ENCODE measurements at regions of chr17 and their contacts with region 1.

Region 1: DNA sequence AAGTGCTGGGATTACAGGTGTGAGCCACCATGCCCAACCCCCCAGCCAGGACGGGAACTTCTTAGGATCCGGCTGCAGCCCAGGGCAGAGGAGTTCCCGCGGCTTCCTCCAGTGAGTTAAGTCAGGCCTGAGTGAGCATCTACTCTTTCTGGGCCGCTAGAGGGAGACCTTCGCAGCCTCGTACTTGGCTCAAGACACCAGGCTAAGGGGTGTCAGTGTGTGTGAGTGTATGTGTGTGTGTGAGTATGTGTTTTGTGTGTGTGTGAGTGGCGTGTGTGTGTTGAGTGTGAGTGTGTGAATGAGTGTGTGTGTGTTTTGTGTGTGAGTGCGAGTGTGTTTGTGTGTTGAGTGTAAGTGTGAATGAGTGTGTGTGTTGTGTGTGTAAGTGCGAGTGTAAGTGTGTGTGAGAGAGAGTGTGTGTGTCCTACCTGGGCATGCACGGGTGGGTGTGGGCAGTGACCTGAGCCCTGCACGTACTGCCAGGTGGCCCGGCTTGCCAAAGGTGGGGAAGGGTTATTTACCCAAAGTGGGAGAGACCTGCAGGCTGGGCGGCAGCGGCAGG is 58.5 kb downstream of the TMEM235 start:
- DNase-seq: peak; percentile 46 to 81 (median 67)
- H3K4me3 ChIP-seq: no peak overlapping the region
- H3K4me3 Mint-ChIP-seq: no peak overlapping the region
- H3K27ac ChIP-seq: no peak overlapping the region
- H3K27ac Mint-ChIP-seq: no peak overlapping the region
- H3K4me1 ChIP-seq: peaks cover 9% of the 10 kb centered on the region
- H3K4me1 Mint-ChIP-seq: no peaks in the 10 kb centered on the region
- H3K27me3 ChIP-seq: no peaks in the 10 kb centered on the region
- H3K27me3 Mint-ChIP-seq: no peaks in the 10 kb centered on the region

Region 2: DNA sequence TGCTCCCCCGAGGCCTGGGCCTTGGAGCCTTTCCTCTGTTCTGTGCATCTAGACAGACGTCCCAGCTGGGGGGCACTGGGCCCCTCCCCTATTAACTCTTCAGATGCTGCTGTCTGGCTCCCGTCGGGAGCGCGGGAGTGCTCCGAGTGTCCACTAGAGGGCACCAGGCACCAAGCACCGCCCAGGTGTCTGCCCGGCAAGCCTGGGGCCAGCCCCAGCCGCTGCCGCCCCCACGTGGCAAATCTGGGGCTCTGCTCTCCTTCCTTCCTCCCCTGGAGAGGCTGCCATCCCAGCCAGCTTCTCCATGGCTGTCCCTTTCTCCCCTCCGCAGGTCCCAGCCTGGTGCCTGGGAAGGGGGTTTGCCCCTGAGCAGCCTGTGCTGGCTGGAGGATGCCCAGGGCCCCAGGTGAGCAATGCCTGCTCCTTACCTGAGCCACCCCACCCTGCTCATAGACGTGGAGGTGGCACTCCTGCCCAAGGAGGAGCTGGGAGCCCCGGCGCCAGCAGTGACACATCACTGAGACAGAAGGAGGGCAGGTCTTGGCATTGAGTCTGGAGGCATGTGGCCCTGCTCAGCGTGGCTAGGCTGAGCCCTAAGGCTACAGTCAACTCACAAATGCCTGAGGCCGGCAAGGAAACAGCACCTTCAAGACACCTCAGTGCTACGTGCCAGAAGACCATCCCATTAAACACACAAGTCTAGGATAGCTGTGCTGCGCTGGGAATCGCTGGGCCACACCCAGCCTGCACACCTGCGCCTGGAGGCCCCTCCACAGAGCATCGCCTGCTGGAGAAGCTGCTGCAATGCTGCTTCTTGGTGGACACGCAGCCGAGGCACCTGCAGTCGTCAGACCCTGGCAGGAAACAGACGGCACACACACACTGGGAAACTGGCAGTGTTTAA is 38.7 kb before region 1 on chr17:
- CTCF ChIA-PET with region 1: interaction called, 12 read pairs
- POLR2A ChIA-PET with region 1: no interaction called
- DNase-seq: peak; percentile 74 to 85 (median 77)
- H3K4me3 ChIP-seq: peak overlapping the region; percentile 77
- H3K4me3 Mint-ChIP-seq: peak overlapping the region; percentile 72 to 84 (median 80)
- H3K27ac ChIP-seq: peak overlapping the region; percentile 20
- H3K27ac Mint-ChIP-seq: peak overlapping the region; percentile 16 to 97 (median 94)
- H3K4me1 ChIP-seq: peaks cover 57% of the 10 kb centered on the region
- H3K4me1 Mint-ChIP-seq: peaks cover 33 to 53% (median 39%) of the 10 kb centered on the region in 3 donors
- H3K27me3 ChIP-seq: no peaks in the 10 kb centered on the region
- H3K27me3 Mint-ChIP-seq: peaks cover 0 to 2% of the 10 kb centered on the region in 2 donors

Region 3: GRCh38 chr17:78390241-78391050 is 100.6 kb after region 1 on chr17:
- CTCF ChIA-PET with region 1: no interaction called
- POLR2A ChIA-PET with region 1: no interaction called
- DNase-seq: no peak
- H3K4me3 ChIP-seq: no peak overlapping the region
- H3K4me3 Mint-ChIP-seq: no peak overlapping the region
- H3K27ac ChIP-seq: no peak overlapping the region
- H3K27ac Mint-ChIP-seq: peak overlapping the region in 3 of 8 donors; percentile 4 to 23 (median 17)
- H3K4me1 ChIP-seq: peaks cover 36% of the 10 kb centered on the region
- H3K4me1 Mint-ChIP-seq: peaks cover 49 to 73% (median 50%) of the 10 kb centered on the region in 3 donors
- H3K27me3 ChIP-seq: no peaks in the 10 kb centered on the region
- H3K27me3 Mint-ChIP-seq: no peaks in the 10 kb centered on the region

Region 4: GRCh38 chr17:78497115-78497540 is 207.2 kb after region 1 on chr17:
- CTCF ChIA-PET with region 1: no interaction called
- POLR2A ChIA-PET with region 1: no interaction called
- DNase-seq: peak; percentile 20 to 58 (median 37)
- H3K4me3 ChIP-seq: no peak overlapping the region
- H3K4me3 Mint-ChIP-seq: no peak overlapping the region
- H3K27ac ChIP-seq: no peak overlapping the region
- H3K27ac Mint-ChIP-seq: no peak overlapping the region
- H3K4me1 ChIP-seq: no peaks in the 10 kb centered on the region
- H3K4me1 Mint-ChIP-seq: no peaks in the 10 kb centered on the region
- H3K27me3 ChIP-seq: no peaks in the 10 kb centered on the region
- H3K27me3 Mint-ChIP-seq: peaks cover 6 to 12% of the 10 kb centered on the region in 2 donors

Region 5: DNA sequence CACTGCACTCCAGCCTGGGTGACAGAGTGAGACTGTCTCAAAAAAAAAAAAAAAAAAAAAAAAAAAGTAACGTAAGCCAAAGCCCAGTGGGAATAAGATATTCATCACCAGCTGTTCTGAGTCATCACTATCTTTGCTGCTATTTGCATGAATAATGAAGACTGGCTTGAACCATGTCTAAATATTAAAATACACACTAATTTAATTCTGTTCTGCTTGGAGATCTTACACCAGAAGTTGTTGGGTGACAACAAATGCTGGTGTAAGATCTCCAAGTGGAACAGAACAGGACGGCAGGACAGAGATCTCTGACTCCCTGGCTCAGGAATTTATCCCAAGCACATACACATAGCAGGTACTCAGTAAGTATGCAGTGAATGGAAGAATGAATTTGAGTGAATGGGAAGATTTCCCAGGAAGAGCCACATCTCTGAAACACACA is 267.7 kb after region 1 on chr17:
- CTCF ChIA-PET with region 1: no interaction called
- POLR2A ChIA-PET with region 1: no interaction called
- DNase-seq: no peak
- H3K4me3 ChIP-seq: no peak overlapping the region
- H3K4me3 Mint-ChIP-seq: no peak overlapping the region
- H3K27ac ChIP-seq: no peak overlapping the region
- H3K27ac Mint-ChIP-seq: no peak overlapping the region
- H3K4me1 ChIP-seq: no peaks in the 10 kb centered on the region
- H3K4me1 Mint-ChIP-seq: no peaks in the 10 kb centered on the region
- H3K27me3 ChIP-seq: no peaks in the 10 kb centered on the region
- H3K27me3 Mint-ChIP-seq: peaks cover 6 to 29% of the 10 kb centered on the region in 2 donors

Measured in CD8-positive, alpha-beta memory T cell (primary cell).